ENCODE measurements at regions of chr4 and their contacts with region 1.

Region 1: GRCh38 chr4:139501927-139502899 is 48.3 kb downstream of the RAB33B start:
- DNase-seq: no peak
- ATAC-seq: no peak
- H3K4me3 ChIP-seq: no peak overlapping the region
- H3K27ac ChIP-seq: no peak overlapping the region
- H3K4me1 ChIP-seq: peaks cover 0 to 17% (median 0%) of the 10 kb centered on the region in 12 donors
- H3K27me3 ChIP-seq: no peaks in the 10 kb centered on the region
- CTCF ChIP-seq: no peak
- POLR2A ChIP-seq: no peak

Region 2: DNA sequence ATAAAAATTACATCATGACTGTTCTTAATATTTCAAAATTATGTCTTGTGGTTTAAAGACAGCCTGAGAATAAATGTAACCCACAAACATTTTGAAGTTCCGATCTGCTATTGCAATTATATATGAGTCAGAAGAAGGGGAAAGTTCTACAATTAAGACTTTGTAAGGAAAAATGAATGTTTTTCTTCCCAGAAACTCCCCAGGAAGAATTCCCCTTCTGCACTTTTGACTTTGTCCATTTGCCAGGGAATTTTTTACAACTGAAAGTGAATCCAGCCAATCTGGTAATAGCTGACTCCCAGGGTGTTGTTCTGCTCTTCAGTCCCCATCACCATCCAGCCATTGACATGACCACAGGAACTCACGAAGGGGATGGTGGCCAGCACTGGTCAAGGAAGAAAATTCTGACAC is 548.2 kb before region 1 on chr4:
- intact Hi-C with region 1: no loop called
- DNase-seq: peak in 1 of 5 donors; percentile 28
- ATAC-seq: peak; percentile 47 to 83 (median 67)
- H3K4me3 ChIP-seq: no peak overlapping the region
- H3K27ac ChIP-seq: peak overlapping the region in 9 of 12 donors; percentile 3 to 78 (median 54)
- H3K4me1 ChIP-seq: peaks cover 0 to 27% (median 0%) of the 10 kb centered on the region in 12 donors
- H3K27me3 ChIP-seq: no peaks in the 10 kb centered on the region
- CTCF ChIP-seq: no peak
- POLR2A ChIP-seq: no peak

Region 3: DNA sequence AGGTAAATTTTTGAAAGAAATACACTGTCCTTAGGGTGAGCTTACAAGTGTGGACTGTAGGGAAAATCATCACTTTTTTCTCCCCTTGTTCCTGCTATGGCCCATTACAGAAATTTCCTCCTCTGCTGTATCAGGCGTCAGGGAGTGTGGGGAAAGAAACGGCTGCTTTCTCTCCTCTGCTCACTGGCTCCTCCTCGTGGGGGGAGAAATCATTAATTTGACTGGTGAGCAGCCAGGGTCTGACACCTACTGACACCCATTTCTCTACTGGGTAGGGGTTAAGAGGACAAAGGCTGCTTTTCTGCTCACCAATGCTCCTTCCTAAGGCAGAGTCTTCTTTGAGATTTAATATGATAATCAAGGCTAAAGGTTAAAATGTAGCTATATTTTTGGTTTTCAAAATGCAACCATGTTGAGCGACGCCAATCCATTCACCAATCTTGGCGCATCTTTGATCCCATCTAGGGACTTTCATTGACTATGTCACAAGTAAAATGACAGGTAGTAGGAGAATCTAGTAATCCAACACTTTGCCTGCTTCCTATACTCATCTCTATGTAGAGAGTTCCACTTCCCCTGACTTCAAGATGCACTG is 28.7 kb after region 1 on chr4:
- intact Hi-C with region 1: loop called in 1 of 10 experiments (anchors 5 kb)
- DNase-seq: peak in 4 of 5 donors; percentile 30 to 53 (median 42)
- ATAC-seq: peak; percentile 22 to 56 (median 54)
- H3K4me3 ChIP-seq: no peak overlapping the region
- H3K27ac ChIP-seq: no peak overlapping the region
- H3K4me1 ChIP-seq: peaks cover 0 to 24% (median 0%) of the 10 kb centered on the region in 12 donors
- H3K27me3 ChIP-seq: no peaks in the 10 kb centered on the region
- CTCF ChIP-seq: peak; percentile 45 to 74 (median 59)
- POLR2A ChIP-seq: no peak

Region 4: GRCh38 chr4:139554893-139555704 is 52.9 kb after region 1 on chr4:
- intact Hi-C with region 1: loop called in 2 of 10 experiments (anchors 5 kb)
- DNase-seq: peak; percentile 93 to 95 (median 94)
- ATAC-seq: peak; percentile 79 to 85 (median 81)
- H3K4me3 ChIP-seq: peak overlapping the region; percentile 72 to 97 (median 93)
- H3K27ac ChIP-seq: peak overlapping the region; percentile 91 to 99 (median 97)
- H3K4me1 ChIP-seq: peaks cover 0 to 76% (median 53%) of the 10 kb centered on the region in 12 donors
- H3K27me3 ChIP-seq: no peaks in the 10 kb centered on the region
- CTCF ChIP-seq: no peak
- POLR2A ChIP-seq: peak in 1 of 2 donors; percentile 78

Region 5: DNA sequence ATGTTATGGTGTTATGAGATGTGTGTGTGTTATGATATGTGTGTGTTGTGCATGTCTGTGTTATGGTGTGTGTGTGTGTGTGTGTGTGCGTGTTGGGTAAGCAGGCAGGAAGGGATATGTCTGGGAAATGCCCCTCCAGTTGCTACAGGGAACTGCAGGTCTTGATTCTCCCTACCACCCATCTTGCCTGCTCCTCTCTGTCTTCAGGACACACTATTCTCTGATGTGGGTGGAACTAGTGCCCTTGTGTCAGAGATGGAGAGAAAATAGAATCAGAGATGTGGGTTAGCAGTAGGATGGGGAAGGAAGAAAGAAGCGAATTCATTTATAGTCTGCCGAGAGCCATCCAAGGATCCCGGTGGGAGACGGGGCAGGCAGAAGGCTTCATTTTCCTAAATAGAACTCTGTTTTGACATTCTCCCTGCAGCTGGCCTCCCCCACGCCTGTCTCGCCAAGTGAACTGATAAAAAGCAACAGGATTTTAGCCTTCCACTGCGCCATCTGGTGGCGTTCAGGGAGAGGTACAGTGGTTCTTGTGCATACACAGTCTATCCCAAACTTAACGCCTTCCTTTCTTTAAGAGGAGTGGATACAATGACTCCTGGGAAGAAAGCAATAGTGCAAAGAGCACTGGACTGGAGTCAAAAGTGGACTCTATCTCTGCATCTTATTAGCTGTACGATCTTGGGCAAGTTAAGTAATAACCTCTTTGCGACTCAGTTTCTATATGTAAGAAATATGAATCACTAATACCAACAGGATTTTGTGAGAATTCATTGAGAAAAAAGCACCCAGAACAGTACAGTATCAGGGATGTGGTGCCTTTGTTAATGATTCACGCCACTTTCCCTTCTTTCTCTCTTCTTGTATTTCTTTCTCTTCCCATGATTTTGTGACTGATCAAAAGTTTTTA is 149.3 kb after region 1 on chr4:
- intact Hi-C with region 1: loop called in 3 of 10 experiments (anchors 5 kb)
- DNase-seq: peak; percentile 81 to 92 (median 84)
- ATAC-seq: peak; percentile 75 to 90 (median 86)
- H3K4me3 ChIP-seq: peak overlapping the region in 5 of 12 donors; percentile 6 to 43 (median 26)
- H3K27ac ChIP-seq: no peak overlapping the region
- H3K4me1 ChIP-seq: peaks cover 0 to 10% (median under 1%) of the 10 kb centered on the region in 12 donors
- H3K27me3 ChIP-seq: no peaks in the 10 kb centered on the region
- CTCF ChIP-seq: peak; percentile 85 to 96 (median 92)
- POLR2A ChIP-seq: no peak

Region 6: DNA sequence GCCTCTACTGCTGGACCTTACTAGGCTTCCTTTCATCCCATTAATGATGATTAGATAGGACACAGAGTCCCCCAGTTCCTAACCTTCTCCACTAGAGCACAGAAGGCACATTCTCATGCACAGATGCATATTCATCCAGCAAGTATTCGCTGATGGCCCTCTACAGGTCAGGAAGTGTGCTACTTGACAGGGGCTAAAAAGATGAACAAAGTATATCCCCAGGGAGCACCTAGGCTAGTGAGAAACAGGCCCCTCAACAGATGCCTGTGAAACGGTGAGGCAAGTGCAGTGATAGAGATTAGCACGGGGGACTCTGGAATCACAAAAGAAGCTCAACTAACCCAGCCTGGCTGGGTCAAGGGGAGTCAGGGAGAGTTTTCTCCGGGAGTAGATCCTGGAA is 259.2 kb after region 1 on chr4:
- intact Hi-C with region 1: no loop called
- DNase-seq: no peak
- ATAC-seq: peak in 3 of 4 donors; percentile 7 to 14 (median 13)
- H3K4me3 ChIP-seq: no peak overlapping the region
- H3K27ac ChIP-seq: peak overlapping the region in 10 of 12 donors; percentile 12 to 96 (median 90)
- H3K4me1 ChIP-seq: peaks cover 13 to 64% (median 47%) of the 10 kb centered on the region in 12 donors
- H3K27me3 ChIP-seq: no peaks in the 10 kb centered on the region
- CTCF ChIP-seq: peak in 9 of 12 donors; percentile 9 to 53 (median 33)
- POLR2A ChIP-seq: no peak

Region 7: DNA sequence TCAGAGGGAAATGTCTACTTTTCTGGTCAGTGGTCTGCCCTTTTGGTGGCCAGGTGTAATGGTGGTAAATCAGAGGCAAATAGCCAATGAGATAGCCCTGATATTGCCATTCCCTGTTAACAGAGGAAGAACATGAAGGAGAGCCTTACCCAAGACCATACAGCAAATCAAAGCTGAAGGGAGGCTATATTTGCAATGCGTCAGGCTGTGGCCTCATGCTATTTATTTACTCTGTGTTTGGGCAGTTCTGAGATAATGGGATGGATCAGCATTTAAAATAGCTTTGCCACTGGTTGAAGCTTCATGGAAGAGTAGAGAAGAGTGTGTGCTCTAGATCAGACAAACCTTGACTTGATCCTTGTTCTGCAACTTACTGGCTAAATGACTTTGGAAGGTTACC is 725.1 kb after region 1 on chr4:
- intact Hi-C with region 1: no loop called
- DNase-seq: no peak
- ATAC-seq: no peak
- H3K4me3 ChIP-seq: no peak overlapping the region
- H3K27ac ChIP-seq: no peak overlapping the region
- H3K4me1 ChIP-seq: no peaks in the 10 kb centered on the region
- H3K27me3 ChIP-seq: no peaks in the 10 kb centered on the region
- CTCF ChIP-seq: no peak
- POLR2A ChIP-seq: no peak